SK-N-SH (cell line): ENCODE measurements at regions of chr15 and their contacts with region 1.

Region 1: DNA sequence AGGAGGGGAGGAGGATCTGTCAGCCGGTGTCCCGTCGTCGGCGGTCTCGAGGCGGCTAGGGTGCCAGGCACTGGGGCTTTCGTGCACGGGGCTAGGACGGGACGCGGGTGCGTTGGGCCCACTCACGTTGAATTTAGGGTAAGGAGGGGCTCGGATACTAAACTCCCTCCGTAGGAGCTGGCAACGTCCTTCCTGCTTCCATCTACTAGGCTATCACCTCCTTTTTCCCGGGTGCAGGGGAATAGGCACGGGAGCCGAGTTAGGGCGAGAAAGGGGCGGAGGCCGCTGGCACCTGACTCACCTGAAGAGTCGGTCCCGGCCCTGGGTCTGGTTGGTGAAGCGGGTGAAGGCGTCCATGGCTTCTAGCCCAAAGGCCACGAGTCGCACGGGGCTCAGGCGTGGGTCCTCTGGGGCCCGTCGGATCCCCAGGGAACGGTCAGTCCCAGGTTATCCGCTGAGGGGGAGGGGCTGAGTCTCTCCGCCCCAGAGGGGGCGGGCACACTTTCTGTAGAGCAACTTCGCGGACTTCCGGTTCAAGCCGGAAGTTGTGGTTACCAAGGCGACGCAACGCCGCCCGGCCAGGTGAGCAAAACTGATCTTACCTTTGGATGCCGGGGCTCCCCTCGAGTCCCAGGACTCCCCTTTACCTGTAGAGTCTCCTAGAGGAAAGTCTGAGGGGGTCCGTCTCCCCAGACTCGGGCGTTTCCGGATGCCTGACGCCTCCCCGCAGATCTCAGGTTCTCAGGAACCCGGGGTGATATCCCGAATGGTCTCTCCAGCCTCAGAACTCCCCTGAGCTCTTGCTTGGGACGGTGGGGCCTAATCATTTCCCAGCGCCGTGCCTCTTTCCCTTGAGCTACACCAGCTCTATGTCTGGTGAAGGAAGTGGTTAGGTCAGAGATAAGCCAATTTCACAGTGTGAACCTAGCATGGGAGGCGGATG is at the starts of genes PEX11A and WDR93:
- DNase-seq: peak; percentile 88
- H3K4me3 ChIP-seq: peak within 1 kb of the TSS; percentile 91 to 95
- H3K27ac ChIP-seq: peak within 1 kb of the TSS in 1 of 2 experiments; percentile 25; a peak in 1 of 4 replicates
- H3K4me1 ChIP-seq: no peaks in the 10 kb centered on the region; a peak in 2 of 4 replicates
- H3K27me3 ChIP-seq: no peaks in the 10 kb centered on the region
- CTCF ChIP-seq: no peak
- EP300 ChIP-seq: no peak
- RAD21 ChIP-seq: no peak
- polyA plus RNA-seq, gene PEX11A: 6.1 and 7.0 TPM in 2 replicates
- polyA plus RNA-seq, gene WDR93: 0.35 and 0.57 TPM in 2 replicates

Region 2: DNA sequence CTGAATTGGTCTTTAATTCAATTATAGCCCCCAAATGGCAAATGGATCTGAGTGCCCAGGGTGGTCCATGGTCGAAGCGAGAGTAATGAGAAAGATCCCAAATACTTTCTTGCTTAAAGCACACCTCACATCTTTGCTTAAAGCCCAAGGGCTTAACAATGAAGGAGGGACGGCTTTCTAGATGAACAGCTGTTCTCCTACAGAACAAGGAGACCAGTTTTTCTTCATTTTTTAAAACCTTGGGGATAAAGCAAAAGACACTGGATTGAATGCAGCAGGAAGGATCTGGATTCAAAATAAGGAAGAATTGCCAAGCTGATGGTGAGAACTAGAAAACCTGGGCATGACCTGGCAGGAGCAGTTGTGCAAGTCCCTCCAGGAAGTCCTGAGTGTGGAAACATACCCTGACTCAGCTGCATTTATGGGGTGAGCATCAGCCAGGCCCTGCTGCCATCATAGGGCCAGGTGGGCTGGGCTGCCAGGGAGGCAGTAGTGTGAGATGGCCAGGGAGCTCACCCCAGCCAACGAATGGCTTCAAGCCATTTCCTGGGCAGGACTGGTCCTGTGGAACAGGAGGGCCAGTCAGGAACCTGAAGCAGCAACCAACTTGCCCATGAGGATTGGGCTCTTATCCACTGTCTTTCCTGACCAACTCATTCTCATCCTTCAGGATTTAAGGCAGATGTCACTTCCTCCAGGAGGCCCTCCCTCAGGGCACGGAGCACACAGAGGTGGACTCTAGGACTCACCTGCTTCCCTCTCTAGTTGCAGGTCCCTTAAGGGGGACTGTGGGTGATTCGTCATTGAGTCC is 175.7 kb before region 1 on chr15:
- CTCF ChIA-PET with region 1: no interaction called
- POLR2A ChIA-PET with region 1: no interaction called
- DNase-seq: no peak
- H3K4me3 ChIP-seq: no peak overlapping the region
- H3K27ac ChIP-seq: no peak overlapping the region
- H3K4me1 ChIP-seq: no peaks in the 10 kb centered on the region
- H3K27me3 ChIP-seq: peaks cover 5% of the 10 kb centered on the region; the same call in 1 of the 2 replicates
- CTCF ChIP-seq: no peak
- EP300 ChIP-seq: no peak
- RAD21 ChIP-seq: no peak

Region 3: GRCh38 chr15:89599021-89599420 is 91.5 kb before region 1 on chr15:
- CTCF ChIA-PET with region 1: no interaction called
- POLR2A ChIA-PET with region 1: no interaction called
- DNase-seq: no peak
- H3K4me3 ChIP-seq: no peak overlapping the region
- H3K27ac ChIP-seq: no peak overlapping the region
- H3K4me1 ChIP-seq: no peaks in the 10 kb centered on the region
- H3K27me3 ChIP-seq: no peaks in the 10 kb centered on the region
- CTCF ChIP-seq: no peak
- EP300 ChIP-seq: no peak
- RAD21 ChIP-seq: no peak

Region 4: DNA sequence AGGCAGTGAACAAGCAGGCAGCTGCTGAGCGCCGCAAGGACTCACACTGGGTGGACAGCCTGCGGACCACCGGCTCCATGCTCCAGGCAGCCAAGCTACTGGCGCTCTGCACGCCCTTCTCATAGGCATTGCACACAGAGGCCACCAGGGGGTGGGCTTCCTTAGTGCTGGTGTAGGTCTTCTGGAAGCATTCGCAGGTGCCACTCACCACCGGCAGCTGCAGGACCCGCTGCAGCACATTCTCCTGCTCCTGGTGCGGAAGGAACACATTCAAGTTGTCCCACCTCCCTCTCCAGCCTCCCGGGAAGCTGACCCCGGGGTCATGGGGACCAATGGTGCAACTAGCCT is 17.4 kb before region 1 on chr15:
- CTCF ChIA-PET with region 1: interaction called, 29 read pairs
- POLR2A ChIA-PET with region 1: no interaction called
- DNase-seq: peak; percentile 81
- H3K4me3 ChIP-seq: no peak overlapping the region; a peak in 1 of 4 replicates
- H3K27ac ChIP-seq: peak overlapping the region in 1 of 2 experiments; percentile 75; a peak in 2 of 4 replicates
- H3K4me1 ChIP-seq: peaks cover 0 to 22% of the 10 kb centered on the region in 2 experiments; a peak in 1 of 4 replicates
- H3K27me3 ChIP-seq: no peaks in the 10 kb centered on the region
- CTCF ChIP-seq: peak; percentile 49
- EP300 ChIP-seq: no peak
- RAD21 ChIP-seq: 0 out of 2 replicates have a peak, but pooled peaks have one; percentile 20